Right ventricle myocardium inferior (tissue), 1 donor: ENCODE measurements at regions of chr2 and their contacts with region 1.

Region 1: GRCh38 chr2:20617892-20618467 is 32.9 kb downstream of the HS1BP3 start:
- DNase-seq: peak; percentile 97
- ATAC-seq: peak; percentile 83

Region 2: GRCh38 chr2:20097879-20098714 is 519.9 kb before region 1 on chr2:
- intact Hi-C with region 1: no loop called
- DNase-seq: peak; percentile 90
- ATAC-seq: peak; percentile 77

Region 3: DNA sequence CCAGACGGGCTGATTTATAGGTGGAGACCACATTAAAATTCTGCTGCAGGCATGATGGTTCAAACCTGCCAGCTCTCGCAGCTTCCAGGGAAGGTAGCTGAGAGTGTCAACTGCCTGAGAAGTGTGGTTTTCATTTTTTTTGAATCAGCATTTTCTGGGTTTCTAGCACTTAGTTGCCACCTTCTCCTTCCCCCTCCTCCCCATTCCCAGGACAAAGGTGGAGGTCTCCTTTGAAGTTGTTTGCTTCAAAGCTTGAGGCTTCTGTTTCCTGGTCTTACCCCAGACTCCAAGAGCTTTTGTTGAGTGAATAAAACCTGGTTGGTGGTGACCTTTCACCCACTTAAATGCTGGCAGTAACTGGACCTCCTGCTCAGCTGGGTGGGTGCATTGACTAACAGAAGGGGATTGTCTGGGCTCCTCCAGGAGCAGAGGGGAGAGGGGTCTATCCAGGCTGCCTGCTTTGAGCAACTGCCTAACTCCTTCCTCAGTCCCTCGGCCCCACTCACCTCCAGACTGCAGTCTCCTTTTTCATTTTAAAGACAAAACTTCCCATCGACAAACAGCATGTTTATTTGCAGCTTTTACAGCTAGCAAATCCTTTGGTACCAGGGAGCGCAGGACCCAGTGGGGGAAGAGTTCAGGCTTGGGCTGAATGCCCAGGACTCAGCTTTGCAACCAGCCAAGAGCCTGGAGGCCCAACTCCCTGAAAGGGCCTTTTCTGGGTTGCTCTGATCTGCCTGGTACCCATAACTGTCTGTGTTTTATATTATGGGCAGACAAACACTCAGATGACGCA is 167.6 kb before region 1 on chr2:
- intact Hi-C with region 1: loop called (anchors 2 kb)
- DNase-seq: no peak
- ATAC-seq: peak; percentile 39

Region 4: GRCh38 chr2:20516646-20517341 is 101.2 kb before region 1 on chr2:
- intact Hi-C with region 1: no loop called
- DNase-seq: peak; percentile 59
- ATAC-seq: peak; percentile 64

Region 5: DNA sequence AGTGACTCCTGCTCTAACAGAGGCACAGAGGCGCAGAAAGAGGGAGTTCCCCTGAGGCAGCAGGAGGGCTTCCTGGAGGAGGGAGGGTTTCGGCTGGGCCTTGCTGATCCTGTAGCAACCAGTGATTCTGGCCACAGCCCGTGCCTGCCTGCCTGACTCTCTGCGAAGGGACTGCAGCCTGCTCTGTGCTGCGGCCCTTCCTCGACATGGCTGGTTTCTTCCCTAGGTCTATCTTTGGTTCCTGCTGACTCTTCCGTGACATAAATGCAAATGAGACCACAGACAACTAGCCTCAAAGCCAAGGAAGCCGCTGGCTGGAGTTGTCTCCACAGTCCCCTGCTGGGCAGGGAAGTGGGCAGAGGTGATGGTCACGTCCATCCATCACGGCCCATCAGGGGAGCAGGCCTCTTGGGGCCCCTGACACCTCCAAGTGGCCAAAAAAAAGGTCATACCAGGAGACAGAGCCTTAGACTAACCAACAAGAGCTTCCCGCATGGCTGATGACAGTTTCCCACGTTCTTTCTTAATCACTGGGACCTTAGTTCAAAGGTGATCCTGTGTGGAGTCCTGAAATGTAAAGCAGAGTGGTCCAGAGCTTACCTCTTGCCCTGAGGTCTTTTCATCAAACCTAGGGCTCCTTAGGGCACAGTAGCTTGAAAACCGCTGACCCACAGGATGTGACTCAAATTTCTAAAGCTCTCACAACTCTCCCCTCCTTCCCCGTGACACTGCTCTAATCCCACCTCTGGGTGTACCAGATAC is 22.4 kb before region 1 on chr2:
- intact Hi-C with region 1: loop called (anchors 2 kb)
- DNase-seq: peak; percentile 66
- ATAC-seq: no peak